Heart left ventricle (tissue), 16 donors: ENCODE measurements at regions of chr7 and their contacts with region 1.

Region 1: GRCh38 chr7:25851332-25852210 is 300.4 kb upstream of the NFE2L3 start:
- DNase-seq: peak; percentile 77 to 87 (median 81)
- ATAC-seq: peak; percentile 71 to 80 (median 79)
- H3K4me3 ChIP-seq: peak overlapping the region in 6 of 12 donors; percentile 3 to 45 (median 14)
- H3K27ac ChIP-seq: peak overlapping the region in 9 of 12 donors; percentile 20 to 87 (median 73)
- H3K4me1 ChIP-seq: peaks cover 0 to 63% (median 32%) of the 10 kb centered on the region in 12 donors
- H3K27me3 ChIP-seq: peaks cover 13 to 70% (median 49%) of the 10 kb centered on the region in 9 donors
- CTCF ChIP-seq: peak; percentile 73 to 86 (median 82)
- POLR2A ChIP-seq: no peak

Region 2: DNA sequence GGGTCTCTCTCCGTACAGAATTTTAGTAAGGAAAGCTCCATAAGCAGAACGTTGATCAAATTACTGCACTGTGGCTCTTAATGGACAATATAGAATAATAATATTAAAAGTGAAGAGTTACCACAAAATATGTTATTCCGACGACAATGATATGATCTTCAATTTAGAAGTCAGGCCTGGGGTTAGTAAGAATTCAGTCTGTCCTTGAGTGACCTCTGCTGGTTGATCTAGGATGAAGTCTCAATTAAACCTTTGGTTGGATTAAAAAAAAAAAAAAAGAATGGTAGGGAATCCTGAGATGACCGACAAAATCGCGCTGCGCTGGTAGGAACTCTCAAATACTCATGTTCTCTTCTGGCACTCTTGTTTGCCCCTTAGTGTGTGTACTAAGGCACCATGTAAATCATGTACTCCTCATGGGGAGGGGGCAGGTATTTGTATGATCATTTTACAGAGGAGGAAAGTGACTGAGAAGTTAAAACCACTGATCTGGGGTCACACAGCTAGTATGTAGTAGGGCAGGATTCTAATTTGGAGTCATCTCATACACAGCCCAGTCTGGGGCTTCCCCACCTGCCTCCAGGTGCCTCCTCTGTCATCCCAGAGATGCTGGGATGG is 462.0 kb before region 1 on chr7:
- intact Hi-C with region 1: loop called in 9 of 10 experiments (anchors 2 to 5 kb)
- DNase-seq: no peak
- ATAC-seq: peak in 3 of 4 donors; percentile 22 to 49 (median 38)
- H3K4me3 ChIP-seq: no peak overlapping the region
- H3K27ac ChIP-seq: no peak overlapping the region
- H3K4me1 ChIP-seq: peaks cover 0 to 17% (median 2%) of the 10 kb centered on the region in 12 donors
- H3K27me3 ChIP-seq: peaks cover 0 to 6% (median 0%) of the 10 kb centered on the region in 9 donors
- CTCF ChIP-seq: peak; percentile 25 to 65 (median 46)
- POLR2A ChIP-seq: no peak

Region 3: GRCh38 chr7:25565949-25566348 is 285.6 kb before region 1 on chr7:
- intact Hi-C with region 1: loop called (anchors 2 to 10 kb)
- DNase-seq: peak in 3 of 5 donors; percentile 49 to 55 (median 50)
- ATAC-seq: no peak
- H3K4me3 ChIP-seq: peak overlapping the region in 1 of 12 donors; percentile 13
- H3K27ac ChIP-seq: no peak overlapping the region
- H3K4me1 ChIP-seq: peaks cover 0 to 6% (median 0%) of the 10 kb centered on the region in 12 donors
- H3K27me3 ChIP-seq: no peaks in the 10 kb centered on the region
- CTCF ChIP-seq: peak; percentile 99 to 100 (median 100)
- POLR2A ChIP-seq: no peak

Region 4: DNA sequence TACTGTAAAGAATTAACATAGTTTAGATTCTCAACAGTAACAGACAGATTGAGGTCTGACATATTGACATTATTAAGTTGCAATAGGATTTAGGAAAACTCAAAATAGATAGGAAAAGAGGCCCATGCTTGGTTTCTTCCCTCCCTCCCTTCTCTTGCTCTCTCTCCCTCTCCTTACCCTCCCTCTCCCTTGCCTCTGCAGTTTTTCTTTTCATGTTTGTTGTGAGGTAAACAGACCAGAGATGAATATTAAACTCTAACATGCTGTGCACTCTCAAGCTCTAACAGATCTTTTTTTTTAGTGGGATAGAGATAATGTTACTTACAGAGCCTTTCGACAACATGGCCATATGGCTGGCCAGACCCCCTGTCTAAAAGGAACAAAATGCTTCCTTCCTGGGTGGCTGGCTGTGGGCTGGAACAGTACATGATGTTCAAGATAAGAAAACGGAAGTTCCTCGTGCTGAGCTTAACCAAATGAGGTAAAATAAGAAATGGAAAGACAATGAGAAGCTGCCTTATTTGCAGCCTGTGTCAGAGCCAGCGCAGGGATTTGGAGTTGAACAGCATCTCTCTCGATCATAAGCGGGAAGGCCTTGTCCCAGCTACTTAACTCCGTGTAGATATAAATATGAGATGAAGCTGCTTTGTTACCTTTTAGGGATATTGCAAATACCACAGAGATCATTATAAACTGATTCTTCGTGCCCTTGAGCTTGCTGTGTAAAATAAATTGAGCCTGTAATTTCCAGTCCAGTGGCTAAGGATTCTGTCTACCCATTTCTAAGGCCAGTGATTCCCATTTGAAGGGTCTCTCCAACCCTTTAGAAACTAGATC is 231.4 kb before region 1 on chr7:
- intact Hi-C with region 1: loop called in 2 of 10 experiments (anchors 5 to 10 kb)
- DNase-seq: peak in 4 of 5 donors; percentile 11 to 51 (median 44)
- ATAC-seq: peak; percentile 59 to 88 (median 68)
- H3K4me3 ChIP-seq: no peak overlapping the region
- H3K27ac ChIP-seq: peak overlapping the region; percentile 14 to 86 (median 70)
- H3K4me1 ChIP-seq: peaks cover 0 to 61% (median 12%) of the 10 kb centered on the region in 12 donors
- H3K27me3 ChIP-seq: no peaks in the 10 kb centered on the region
- CTCF ChIP-seq: no peak
- POLR2A ChIP-seq: peak in 1 of 2 donors; percentile 20

Region 5: DNA sequence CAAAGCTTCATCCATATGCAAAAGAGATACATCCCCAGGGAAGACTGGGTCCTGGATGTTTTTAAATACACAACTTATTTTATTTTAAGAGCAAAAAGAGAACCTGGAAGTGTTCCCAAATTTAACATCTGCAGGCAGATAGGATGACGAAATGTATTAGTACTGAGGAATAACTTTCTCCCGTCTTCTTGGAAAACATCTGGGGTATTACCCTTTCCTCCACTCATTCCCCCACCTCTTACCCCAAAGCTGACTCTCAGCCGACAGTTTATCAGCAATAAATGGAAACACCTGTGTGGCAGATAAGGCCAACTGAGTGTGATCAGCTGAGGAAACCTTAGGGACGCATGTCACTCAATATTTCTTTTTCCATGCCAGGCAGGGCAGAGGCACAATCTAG is 187.7 kb before region 1 on chr7:
- intact Hi-C with region 1: loop called in 1 of 10 experiments (anchors 5 kb)
- DNase-seq: no peak
- ATAC-seq: peak; percentile 32 to 81 (median 70)
- H3K4me3 ChIP-seq: no peak overlapping the region
- H3K27ac ChIP-seq: peak overlapping the region in 8 of 12 donors; percentile 36 to 78 (median 64)
- H3K4me1 ChIP-seq: peaks cover 0 to 48% (median 6%) of the 10 kb centered on the region in 12 donors
- H3K27me3 ChIP-seq: peaks cover 0 to 11% (median 0%) of the 10 kb centered on the region in 9 donors
- CTCF ChIP-seq: no peak
- POLR2A ChIP-seq: no peak

Region 6: DNA sequence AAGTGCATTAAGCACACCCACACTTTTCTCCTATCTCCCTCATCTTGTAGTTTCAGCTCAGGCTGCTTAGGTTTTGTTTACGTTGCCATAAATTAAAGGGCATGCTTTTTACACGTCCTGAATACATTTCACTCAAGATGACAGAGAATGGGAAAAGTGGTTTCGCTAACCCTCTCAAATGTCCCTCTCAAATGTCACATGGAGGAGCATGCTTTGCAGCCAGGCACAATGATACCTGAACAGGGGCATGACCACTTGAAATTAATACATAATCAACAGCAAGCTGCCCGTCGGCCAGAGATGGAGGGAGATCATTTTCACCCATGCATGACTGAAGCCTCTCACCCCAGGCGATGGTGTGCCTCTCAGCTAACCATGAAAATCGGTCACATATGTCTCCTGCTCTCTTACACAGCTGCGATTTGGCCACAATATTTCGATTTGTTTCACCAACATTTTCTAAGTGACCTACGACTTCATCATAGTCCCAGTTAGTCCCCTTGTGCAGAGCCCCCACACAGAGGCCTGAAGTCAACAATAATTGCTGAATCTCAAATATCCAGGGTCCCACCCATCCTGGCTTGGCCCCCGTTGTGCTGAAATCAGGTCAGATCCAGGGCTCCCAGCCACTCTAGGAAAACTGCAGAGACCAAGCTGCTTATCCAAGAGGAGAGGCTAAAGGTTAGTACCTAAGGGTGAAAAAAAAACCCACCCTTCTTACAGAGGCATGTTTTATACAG is 73.4 kb before region 1 on chr7:
- intact Hi-C with region 1: loop called in 3 of 10 experiments (anchors 5 to 10 kb)
- DNase-seq: peak in 1 of 5 donors; percentile 35
- ATAC-seq: no peak
- H3K4me3 ChIP-seq: no peak overlapping the region
- H3K27ac ChIP-seq: no peak overlapping the region
- H3K4me1 ChIP-seq: peaks cover 0 to 12% (median 0%) of the 10 kb centered on the region in 12 donors
- H3K27me3 ChIP-seq: no peaks in the 10 kb centered on the region
- CTCF ChIP-seq: no peak
- POLR2A ChIP-seq: no peak

Region 7: DNA sequence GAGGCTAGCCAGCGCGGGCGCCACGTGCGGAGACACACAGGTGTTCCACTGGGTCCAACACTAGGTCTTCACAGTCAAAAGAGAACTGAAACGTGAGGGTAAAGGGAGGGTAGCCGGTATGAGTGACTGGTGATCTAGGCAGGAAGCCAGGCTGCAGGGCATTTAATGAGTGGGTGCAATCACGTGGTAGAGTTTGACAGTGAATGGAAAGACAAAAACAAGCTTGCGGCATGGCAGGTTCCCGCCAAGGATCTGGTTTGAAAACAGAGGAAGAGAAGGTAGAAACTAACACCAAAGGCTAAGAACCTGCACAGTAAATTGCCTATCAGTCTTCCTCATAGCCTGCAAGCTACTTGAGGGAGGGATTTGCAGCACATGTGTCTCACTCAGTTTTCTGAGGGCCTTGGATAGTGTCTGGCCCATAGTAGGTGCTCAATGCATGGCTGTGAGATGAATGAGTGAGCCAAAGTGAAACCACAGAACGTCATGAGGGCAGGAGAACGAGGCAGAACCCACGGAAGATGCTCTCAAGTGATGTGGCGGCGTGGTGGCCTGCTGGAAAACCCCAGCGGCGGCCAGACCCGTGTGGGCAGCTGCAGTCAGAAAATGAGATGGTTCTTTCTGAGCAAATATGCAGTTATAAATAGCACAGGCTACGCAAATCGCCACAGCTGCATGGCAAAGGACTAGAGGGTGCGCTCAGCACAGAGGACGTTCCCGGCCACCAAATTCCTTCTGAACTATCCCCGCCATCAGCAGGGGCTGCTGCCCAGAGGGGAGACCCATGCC is 116.8 kb after region 1 on chr7:
- intact Hi-C with region 1: no loop called
- DNase-seq: no peak
- ATAC-seq: peak in 2 of 4 donors; percentile 20 to 31
- H3K4me3 ChIP-seq: peak overlapping the region in 1 of 12 donors; percentile 5
- H3K27ac ChIP-seq: no peak overlapping the region
- H3K4me1 ChIP-seq: peaks cover 0 to 11% (median 2%) of the 10 kb centered on the region in 12 donors
- H3K27me3 ChIP-seq: peaks cover 0 to 36% (median 4%) of the 10 kb centered on the region in 9 donors
- CTCF ChIP-seq: no peak
- POLR2A ChIP-seq: no peak

Region 8: GRCh38 chr7:27160546-27161213 is 1309.1 kb after region 1 on chr7:
- intact Hi-C with region 1: loop called in 1 of 10 experiments (anchors 10 kb)
- DNase-seq: peak; percentile 76 to 92 (median 85)
- ATAC-seq: peak; percentile 35 to 85 (median 82)
- H3K4me3 ChIP-seq: peak overlapping the region; percentile 40 to 67 (median 56)
- H3K27ac ChIP-seq: peak overlapping the region in 1 of 12 donors; percentile 71
- H3K4me1 ChIP-seq: peaks cover 0 to 61% (median 19%) of the 10 kb centered on the region in 12 donors
- H3K27me3 ChIP-seq: peaks cover 79 to 100% (median 98%) of the 10 kb centered on the region in 9 donors
- CTCF ChIP-seq: peak; percentile 97 to 100 (median 100)
- POLR2A ChIP-seq: no peak

Region 9: GRCh38 chr7:27714831-27715444 is 1863.4 kb after region 1 on chr7:
- intact Hi-C with region 1: no loop called
- DNase-seq: no peak
- ATAC-seq: no peak
- H3K4me3 ChIP-seq: no peak overlapping the region
- H3K27ac ChIP-seq: no peak overlapping the region
- H3K4me1 ChIP-seq: peaks cover 0 to 1% (median 0%) of the 10 kb centered on the region in 12 donors
- H3K27me3 ChIP-seq: no peaks in the 10 kb centered on the region
- CTCF ChIP-seq: no peak
- POLR2A ChIP-seq: no peak